ENCODE measurements at regions of chr12 and their contacts with region 1.

Region 1: DNA sequence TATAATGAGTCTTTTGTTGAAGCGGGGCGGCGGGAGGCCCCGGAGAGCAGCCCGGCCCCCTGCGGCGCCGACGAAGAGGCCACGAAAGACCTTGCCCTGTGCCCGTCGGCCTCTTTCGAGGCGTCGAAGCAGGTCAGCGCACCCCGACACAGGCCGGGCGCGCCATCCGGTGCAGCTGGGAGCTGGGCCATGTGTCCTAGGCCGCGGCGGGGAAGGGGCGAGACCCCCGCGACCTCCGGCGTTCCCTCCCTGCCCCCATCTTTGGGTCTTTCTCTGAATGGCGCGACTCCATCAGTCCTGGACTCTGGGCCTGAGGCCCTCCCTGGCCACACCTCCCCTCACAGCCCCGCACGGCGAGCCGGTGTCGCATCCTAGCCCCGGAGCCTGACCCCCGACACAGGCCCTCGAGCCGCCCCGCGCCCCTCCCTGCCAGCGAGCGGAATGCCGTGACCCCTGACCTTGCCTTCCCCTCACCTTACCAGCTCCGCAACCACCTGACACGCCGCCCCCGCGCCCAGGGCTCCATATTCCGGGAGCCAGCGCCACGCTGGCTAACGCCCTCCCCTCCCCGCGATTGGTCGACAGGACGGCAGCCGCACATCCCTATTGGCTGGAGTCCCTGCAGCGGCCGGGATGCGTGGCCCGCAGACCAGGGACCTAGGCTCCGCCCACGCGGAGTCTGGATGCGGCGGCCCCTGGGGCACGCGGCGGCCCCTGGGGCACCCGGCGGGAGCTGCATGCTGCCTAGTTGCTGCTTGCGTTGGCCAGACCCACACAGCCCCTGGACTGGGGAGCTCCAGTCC is at the start of gene SLC11A2:
- DNase-seq: peak; percentile 91
- H3K4me3 Mint-ChIP-seq: peak within 1 kb of the TSS; percentile 92
- H3K27ac Mint-ChIP-seq: peak within 1 kb of the TSS; percentile 98
- H3K4me1 Mint-ChIP-seq: peaks cover 55% of the 10 kb centered on the region
- H3K27me3 Mint-ChIP-seq: peaks cover 18% of the 10 kb centered on the region
- total RNA-seq, gene SLC11A2: 56.9 and 63.9 TPM in 2 replicates

Region 2: GRCh38 chr12:51009056-51009440 is 17.0 kb before region 1 on chr12:
- intact Hi-C with region 1: loop called (anchors 1 kb)
- DNase-seq: peak; percentile 28
- H3K4me3 Mint-ChIP-seq: peak overlapping the region; percentile 6
- H3K27ac Mint-ChIP-seq: peak overlapping the region; percentile 75
- H3K4me1 Mint-ChIP-seq: peaks cover 28% of the 10 kb centered on the region
- H3K27me3 Mint-ChIP-seq: no peaks in the 10 kb centered on the region

Region 3: GRCh38 chr12:51083126-51083833 is 57.2 kb after region 1 on chr12 and contains the start of gene CSRNP2:
- intact Hi-C with region 1: loop called (anchors 1 kb)
- DNase-seq: peak; percentile 94
- H3K4me3 Mint-ChIP-seq: peak within 1 kb of the TSS; percentile 99
- H3K27ac Mint-ChIP-seq: peak within 1 kb of the TSS; percentile 91
- H3K4me1 Mint-ChIP-seq: peaks cover 34% of the 10 kb centered on the region
- H3K27me3 Mint-ChIP-seq: peaks cover 3% of the 10 kb centered on the region
- total RNA-seq, gene CSRNP2: 28.6 and 35.2 TPM in 2 replicates

Measured in activated T-helper 1 cell treated with anti-CD3 and anti-CD28 coated beads, Interleukin-12 subunit alpha, Interleukin-12 subunit beta, Interleukin-2, Interleukin-4 antibody, amounts not matched to agents 30 ng/mL and 10 ng/mL and 1 ng/mL, durations not matched to agents 14 hours and 24 hours and 36 hours (primary cell).